ENCODE measurements at regions of chr17 and their contacts with region 1.

Region 1: GRCh38 chr17:21284319-21285163 is at the start of gene MAP2K3:
- DNase-seq: peak; percentile 97
- H3K4me3 Mint-ChIP-seq: peak within 1 kb of the TSS; percentile 96
- H3K27ac Mint-ChIP-seq: peak within 1 kb of the TSS; percentile 91
- H3K4me1 Mint-ChIP-seq: peaks cover 44% of the 10 kb centered on the region
- H3K27me3 Mint-ChIP-seq: no peaks in the 10 kb centered on the region
- total RNA-seq, gene MAP2K3: 149 and 157 TPM in 2 replicates

Region 2: GRCh38 chr17:21126645-21127510 is 157.7 kb before region 1 on chr17 and contains the start of gene DHRS7B:
- intact Hi-C with region 1: loop called (anchors 1 kb)
- DNase-seq: peak; percentile 95
- H3K4me3 Mint-ChIP-seq: peak within 1 kb of the TSS; percentile 93
- H3K27ac Mint-ChIP-seq: peak within 1 kb of the TSS; percentile 95
- H3K4me1 Mint-ChIP-seq: peaks cover 24% of the 10 kb centered on the region
- H3K27me3 Mint-ChIP-seq: no peaks in the 10 kb centered on the region
- total RNA-seq, gene DHRS7B: 17.7 and 19.4 TPM in 2 replicates

Region 3: GRCh38 chr17:21252796-21253645 is 31.5 kb before region 1 on chr17 and contains the start of gene NATD1:
- intact Hi-C with region 1: loop called (anchors 1 kb)
- DNase-seq: peak; percentile 65
- H3K4me3 Mint-ChIP-seq: peak within 1 kb of the TSS; percentile 79
- H3K27ac Mint-ChIP-seq: no peak within 1 kb of the TSS
- H3K4me1 Mint-ChIP-seq: peaks cover 4% of the 10 kb centered on the region
- H3K27me3 Mint-ChIP-seq: peaks cover 12% of the 10 kb centered on the region
- total RNA-seq, gene NATD1: 1.4 and 1.6 TPM in 2 replicates

Region 4: DNA sequence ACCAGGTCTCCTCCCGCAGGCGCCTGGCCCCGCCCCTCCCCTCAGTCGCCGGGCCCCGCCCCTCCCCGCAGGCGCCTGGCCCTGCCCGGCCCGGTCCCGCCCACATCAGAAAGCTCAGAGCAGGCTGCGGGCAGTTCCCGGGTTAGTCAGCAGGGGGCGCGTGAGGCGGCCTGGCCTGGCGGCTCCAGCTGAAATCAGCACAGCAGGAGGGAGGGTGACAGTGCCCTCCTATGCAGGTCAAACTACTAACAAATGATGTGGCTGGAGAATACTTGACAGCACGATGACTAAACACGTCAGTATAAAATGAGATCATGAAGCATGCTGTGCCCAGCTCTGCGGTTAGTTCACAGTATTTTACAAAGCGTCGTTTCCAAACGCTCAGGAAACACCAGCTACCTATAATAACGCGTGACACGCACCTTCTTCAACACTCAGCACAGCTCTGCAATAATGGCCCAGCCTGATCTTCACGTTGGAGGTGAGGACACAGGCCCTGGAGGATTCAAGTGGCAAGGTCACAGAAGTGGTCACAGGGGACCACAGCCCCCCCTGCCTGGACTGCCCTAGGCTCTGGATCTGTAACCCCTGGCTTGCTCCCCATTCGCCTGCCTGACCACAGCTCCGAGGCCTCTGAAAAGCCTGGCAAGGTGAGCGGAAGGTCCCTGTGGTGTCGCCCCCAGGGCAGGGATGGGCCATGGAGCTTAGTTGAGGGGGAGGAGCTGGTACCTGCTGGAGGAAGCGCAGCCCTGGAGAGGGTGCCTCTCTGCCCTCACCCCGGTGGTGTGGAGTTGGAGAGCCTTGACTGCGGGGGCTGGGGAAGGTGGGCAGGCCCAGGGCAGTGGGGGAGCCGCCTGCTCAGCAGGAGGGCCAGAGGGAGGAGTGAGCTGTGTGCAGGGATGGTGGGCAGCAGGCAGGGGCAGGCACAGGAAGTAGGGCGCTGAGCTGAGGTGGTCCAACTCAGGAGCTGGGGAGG is 172.8 kb after region 1 on chr17:
- intact Hi-C with region 1: loop called (anchors 1 kb)
- DNase-seq: peak; percentile 86
- H3K4me3 Mint-ChIP-seq: no peak overlapping the region
- H3K27ac Mint-ChIP-seq: no peak overlapping the region
- H3K4me1 Mint-ChIP-seq: peaks cover 7% of the 10 kb centered on the region
- H3K27me3 Mint-ChIP-seq: peaks cover 26% of the 10 kb centered on the region